A673 (cell line): ENCODE measurements at regions of chr11 and their contacts with region 1.

Region 1: DNA sequence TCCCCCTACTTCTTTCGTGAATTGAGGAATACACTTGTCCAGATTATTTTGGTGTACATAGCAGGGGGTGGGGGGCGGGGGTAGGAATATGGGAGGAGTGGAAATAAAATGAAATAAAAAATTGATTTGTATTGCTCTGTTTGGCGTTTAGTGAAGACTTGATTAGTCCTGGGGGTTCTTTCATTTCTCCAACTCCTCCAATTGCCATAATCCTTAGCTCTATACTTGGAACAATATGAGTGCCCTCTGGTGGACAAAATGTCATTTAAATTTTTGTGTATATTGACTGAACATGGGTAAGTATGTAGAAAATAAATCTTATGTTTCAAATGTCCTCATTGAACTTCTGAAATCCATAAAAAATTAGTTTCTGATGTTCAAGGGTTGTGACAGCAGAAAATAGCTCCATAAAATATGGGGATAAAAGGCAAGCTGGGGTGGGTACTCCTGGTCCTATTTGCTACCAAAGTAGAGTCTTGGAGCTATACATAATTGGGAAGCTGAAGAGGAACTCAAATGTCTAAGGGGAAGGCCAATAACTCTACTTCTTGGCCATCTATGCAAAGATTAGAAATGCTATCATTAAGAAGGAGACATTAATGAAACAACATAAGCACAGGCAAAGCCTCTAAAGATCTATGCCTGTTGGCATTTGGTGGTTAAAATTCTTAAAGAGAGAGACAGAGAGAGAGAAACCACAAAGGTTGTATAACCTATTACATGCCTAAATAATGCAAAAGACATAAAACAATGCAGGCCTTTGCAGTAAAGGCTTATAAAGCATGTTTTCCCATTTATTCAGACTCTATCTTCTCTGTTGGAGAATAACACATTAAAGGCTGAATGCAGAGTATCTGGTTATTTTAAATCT is 421.6 kb downstream of the METTL15 start:
- DNase-seq: peak; percentile 89
- H3K4me3 ChIP-seq: no peak overlapping the region
- H3K27ac ChIP-seq: no peak overlapping the region
- H3K4me1 ChIP-seq: no peaks in the 10 kb centered on the region
- H3K27me3 ChIP-seq: peaks cover 38% of the 10 kb centered on the region
- CTCF ChIP-seq: peak; percentile 93

Region 2: DNA sequence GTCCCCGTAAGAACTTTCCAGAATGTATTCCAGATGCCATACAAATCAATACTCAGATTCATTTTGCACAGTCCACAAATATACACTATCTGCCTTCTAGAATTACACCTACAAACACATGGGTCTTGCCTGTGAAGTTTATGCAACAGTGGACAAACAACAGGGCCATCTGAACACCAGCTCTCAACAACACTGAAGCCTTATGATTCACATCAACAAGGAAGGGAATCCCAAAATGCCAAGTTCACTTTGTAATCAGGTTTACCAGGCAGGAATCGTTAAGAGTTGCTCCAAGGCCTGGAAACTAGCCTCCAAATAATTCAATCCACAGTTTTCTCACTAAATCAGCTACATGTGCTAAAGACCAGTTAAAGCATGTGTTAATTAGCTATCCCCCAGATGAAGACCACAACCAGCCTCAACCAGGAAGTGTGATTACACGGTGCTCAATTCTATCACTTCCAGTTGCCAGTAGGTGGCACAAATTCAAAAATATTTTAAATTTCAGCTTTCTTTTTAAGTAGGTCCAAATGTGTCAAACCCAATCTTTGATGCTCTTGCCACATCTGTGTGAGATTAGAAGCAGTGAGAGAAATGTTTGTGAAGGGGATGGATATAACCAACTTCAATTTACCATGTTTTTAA is 690.4 kb before region 1 on chr11:
- CTCF ChIA-PET with region 1: interaction called, 6 read pairs
- POLR2A ChIA-PET with region 1: no interaction called
- intact Hi-C with region 1: loop called (anchors 5 kb)
- DNase-seq: peak; percentile 79
- H3K4me3 ChIP-seq: no peak overlapping the region
- H3K27ac ChIP-seq: no peak overlapping the region
- H3K4me1 ChIP-seq: no peaks in the 10 kb centered on the region
- H3K27me3 ChIP-seq: peaks cover 57% of the 10 kb centered on the region
- CTCF ChIP-seq: peak; percentile 88

Region 3: GRCh38 chr11:28743061-28743550 is 213.3 kb after region 1 on chr11:
- CTCF ChIA-PET with region 1: no interaction called
- POLR2A ChIA-PET with region 1: no interaction called
- intact Hi-C with region 1: no loop called
- DNase-seq: no peak
- H3K4me3 ChIP-seq: no peak overlapping the region
- H3K27ac ChIP-seq: no peak overlapping the region
- H3K4me1 ChIP-seq: no peaks in the 10 kb centered on the region
- H3K27me3 ChIP-seq: no peaks in the 10 kb centered on the region
- CTCF ChIP-seq: no peak

Region 4: DNA sequence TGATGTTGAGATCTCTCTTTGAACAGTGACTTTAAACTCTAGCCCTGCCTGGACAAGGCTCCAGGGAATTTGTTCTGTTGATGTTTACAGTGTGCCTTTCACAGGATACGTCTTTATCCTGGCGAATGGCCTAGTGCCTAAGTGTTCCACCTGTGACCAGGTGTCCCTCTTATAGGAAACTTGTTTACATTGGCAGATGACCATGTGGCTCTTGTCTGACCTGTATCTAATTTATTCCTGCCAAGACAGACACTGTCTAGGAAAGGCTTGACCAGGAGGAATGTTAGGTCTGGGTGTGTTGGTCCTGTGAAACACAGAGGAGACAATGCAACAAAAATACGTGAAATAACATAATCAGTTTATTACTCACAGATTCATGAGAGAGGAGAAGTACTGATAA is 454.0 kb after region 1 on chr11:
- CTCF ChIA-PET with region 1: no interaction called
- POLR2A ChIA-PET with region 1: no interaction called
- intact Hi-C with region 1: no loop called
- DNase-seq: no peak
- H3K4me3 ChIP-seq: no peak overlapping the region
- H3K27ac ChIP-seq: no peak overlapping the region
- H3K4me1 ChIP-seq: peaks cover 14% of the 10 kb centered on the region
- H3K27me3 ChIP-seq: peaks cover 41% of the 10 kb centered on the region
- CTCF ChIP-seq: no peak

Region 5: DNA sequence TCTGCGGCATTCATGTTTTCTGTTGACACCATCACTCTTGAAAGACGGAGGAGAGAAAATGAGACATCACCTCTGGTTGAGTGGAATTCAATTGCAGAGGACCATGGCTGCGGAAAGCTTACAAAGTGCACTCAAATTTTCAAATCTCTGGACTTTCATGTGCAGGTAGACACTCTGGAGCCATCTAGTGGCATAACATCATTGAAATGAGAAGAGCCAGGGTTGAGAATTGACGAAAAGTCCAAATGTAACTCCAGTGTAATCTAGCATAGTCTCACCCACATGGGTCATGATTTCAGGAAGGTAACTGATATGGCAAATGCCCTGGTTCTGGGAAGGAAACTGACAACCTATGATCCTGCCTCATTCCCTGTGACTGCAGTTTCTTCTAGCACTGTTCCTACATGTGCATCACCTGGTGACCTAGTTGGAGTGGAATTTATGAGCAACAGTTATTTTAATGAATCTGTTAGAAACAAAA is 799.2 kb after region 1 on chr11:
- CTCF ChIA-PET with region 1: interaction called, 4 read pairs
- POLR2A ChIA-PET with region 1: no interaction called
- intact Hi-C with region 1: loop called (anchors 1 kb)
- DNase-seq: peak; percentile 90
- H3K4me3 ChIP-seq: no peak overlapping the region
- H3K27ac ChIP-seq: no peak overlapping the region
- H3K4me1 ChIP-seq: no peaks in the 10 kb centered on the region
- H3K27me3 ChIP-seq: peaks cover 35% of the 10 kb centered on the region
- CTCF ChIP-seq: peak; percentile 99